Aorta (tissue), 5 donors: ENCODE measurements at regions of chr7 and their contacts with region 1.

Region 1: DNA sequence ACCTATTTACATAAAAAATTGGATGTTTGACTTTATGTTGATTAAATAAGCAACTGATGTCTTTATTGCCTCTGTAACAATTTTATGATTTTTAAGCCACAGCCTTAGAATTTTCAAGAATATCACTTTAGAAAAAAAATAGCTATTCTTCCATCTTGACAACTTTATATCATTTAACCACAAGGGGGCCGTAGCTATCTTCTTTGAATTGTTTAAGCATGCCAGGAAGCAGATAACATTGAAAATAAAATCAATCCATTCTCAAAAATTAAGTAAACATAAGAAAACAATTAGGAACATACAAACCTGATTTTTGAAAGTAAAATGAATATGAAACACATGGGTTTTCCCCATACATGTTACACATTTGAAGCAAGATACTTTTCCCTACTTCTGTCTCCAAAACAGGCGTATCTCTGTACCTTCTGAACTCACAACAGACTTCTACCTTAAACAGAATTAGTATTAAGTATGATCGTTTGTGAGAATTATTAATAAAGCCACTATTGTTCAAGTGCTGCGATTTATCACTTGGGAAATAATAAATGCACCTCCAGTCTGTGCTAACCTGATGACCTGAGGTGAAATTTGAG is 209.0 kb downstream of the CACNA2D1 start:
- DNase-seq: no peak
- ATAC-seq: no peak
- H3K4me3 ChIP-seq: no peak overlapping the region
- H3K27ac ChIP-seq: no peak overlapping the region
- H3K4me1 ChIP-seq: no peaks in the 10 kb centered on the region
- H3K27me3 ChIP-seq: no peaks in the 10 kb centered on the region

Region 2: DNA sequence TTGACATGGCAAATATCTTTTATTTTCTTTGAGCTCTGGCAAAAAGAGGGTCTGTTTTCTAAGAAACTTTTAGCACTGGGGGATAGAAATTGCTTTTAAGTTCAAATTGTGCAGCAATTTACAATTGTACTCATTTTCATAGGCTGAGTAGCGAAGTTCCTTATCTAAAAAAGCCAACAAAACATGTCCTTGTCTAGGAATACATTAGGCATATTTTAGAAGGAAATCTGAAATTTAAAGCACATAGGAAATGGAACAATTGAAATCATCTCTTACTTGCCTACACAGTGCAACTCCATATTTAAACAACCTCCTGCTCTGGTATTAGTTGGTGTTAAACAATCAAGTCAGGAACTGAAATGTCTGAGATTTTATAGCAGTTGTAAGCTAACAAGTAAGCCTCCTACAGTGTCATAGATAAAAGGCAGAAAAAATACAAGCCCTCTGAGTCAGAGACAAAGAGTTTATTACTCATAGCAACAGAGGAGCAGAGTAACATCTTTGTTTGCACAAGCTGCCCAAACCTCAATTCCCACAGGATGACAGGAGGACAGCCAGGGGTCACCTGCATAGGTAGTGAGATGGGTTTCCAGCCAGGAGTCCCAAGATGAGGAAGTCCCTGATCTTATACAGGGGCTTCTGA is 184.5 kb before region 1 on chr7:
- intact Hi-C with region 1: loop called in 1 of 2 experiments (anchors 10 kb)
- DNase-seq: no peak
- ATAC-seq: peak; percentile 38
- H3K4me3 ChIP-seq: no peak overlapping the region
- H3K27ac ChIP-seq: no peak overlapping the region
- H3K4me1 ChIP-seq: no peaks in the 10 kb centered on the region
- H3K27me3 ChIP-seq: no peaks in the 10 kb centered on the region

Region 3: DNA sequence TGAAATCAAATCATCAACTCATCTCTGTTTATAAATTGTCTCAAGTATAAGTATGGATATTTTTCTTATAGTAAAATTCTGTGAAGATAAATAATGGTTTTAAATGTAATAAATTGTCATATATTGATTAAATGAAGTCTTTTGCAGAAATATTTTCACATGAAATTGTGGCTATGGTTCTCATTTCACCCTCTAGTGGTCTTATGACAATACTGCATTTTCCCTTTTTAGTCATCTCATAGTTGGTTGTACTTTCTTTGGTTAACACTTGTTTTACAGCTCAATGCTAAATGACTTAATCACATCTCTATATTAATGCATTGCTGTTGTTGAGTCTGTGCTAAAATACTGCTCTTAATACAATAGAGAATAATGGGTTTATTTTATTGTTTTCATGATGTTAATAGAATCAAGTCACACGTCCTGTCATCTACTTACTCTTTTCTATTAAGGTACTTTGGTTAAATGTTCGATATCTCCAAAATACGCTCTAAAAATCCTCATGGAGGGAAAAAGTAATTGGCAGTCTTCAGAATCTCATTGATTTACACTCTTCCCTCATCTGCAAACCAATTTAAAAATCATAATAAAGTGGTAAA is 247.0 kb after region 1 on chr7:
- intact Hi-C with region 1: loop called (anchors 2 to 5 kb)
- DNase-seq: no peak
- ATAC-seq: no peak
- H3K4me3 ChIP-seq: no peak overlapping the region
- H3K27ac ChIP-seq: no peak overlapping the region
- H3K4me1 ChIP-seq: no peaks in the 10 kb centered on the region
- H3K27me3 ChIP-seq: no peaks in the 10 kb centered on the region

Region 4: DNA sequence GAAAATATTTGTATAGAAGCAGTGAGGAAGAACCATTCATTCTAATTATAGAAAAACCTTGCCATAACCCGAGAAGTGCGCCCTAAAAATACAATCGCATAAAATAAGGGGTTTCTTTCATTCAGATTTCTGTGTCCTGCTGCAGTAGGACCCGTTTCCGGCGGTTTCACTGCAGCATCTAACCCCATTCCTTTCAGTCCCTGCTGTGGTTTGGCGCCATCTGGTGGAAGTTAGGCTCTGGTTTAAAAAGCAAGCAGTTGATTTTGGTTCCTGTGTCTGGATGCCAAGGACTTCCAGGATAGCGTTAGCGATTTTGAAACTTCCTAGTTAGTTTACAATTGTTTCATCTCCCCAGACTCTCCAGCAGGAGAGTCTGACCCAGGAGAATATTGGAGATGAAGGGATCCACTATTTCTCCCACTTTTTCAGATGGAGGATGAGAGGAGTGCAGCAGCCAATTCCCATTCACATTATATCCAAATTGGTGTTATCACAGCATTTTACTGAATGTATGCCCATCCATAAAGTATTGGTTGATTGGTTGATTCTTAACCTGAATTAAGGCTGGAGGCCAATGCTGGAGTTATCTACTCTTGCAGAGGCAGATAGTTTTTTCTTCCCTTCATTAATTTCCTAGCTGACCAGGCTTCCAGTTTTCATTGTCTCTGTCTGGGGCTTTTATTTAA is 337.8 kb after region 1 on chr7:
- intact Hi-C with region 1: loop called (anchors 5 to 10 kb)
- DNase-seq: peak; percentile 88 to 92
- ATAC-seq: peak; percentile 86
- H3K4me3 ChIP-seq: no peak overlapping the region
- H3K27ac ChIP-seq: no peak overlapping the region
- H3K4me1 ChIP-seq: no peaks in the 10 kb centered on the region
- H3K27me3 ChIP-seq: no peaks in the 10 kb centered on the region